Dendritic cell treated with granulocyte-macrophage colony-stimulating factor and Interleukin-4, amounts not matched to agents 40 ng/mL and 50 ng/mL, for 4 days (primary cell): ENCODE measurements at regions of chr11 and their contacts with region 1.

Region 1: DNA sequence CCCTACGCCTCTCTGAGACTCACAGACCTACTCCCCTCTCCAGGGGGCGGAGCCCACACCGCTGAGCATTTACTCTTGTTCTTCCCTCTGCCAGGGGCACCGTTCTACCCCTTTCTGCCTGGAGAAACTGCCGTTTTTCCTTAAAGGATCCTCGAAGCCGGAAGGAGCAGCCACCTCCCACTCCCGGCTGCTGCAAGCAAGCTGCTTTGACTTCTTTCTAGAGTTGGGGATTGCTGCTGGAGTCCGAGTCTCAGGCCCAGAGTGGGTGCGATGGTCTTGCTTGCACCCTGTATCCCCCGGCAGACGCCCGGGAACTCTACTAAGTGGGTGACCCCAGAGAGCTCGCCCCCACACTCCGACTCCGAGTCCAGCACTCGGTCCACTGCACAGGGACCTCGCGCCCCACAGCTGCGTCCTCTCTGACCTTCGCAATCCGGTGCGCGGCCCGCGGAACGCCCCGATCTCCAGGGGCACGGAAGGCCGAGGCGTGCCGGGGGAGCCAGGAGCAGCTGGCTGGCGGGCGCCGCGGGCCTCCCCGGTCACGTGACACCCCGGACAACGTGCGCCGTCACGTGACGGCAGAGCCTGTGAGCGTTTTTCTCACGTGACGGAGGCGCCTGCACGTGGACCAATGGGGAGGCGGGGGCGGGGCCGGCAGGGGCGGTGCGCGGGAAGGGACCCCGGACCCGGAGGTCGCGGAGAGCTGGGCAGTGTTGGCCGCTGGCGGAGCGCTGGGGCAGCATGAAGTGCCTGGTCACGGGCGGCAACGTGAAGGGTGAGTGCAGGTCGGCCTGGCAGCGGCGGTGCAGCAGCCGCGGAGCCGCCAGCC is at the start of gene RAD9A:
- H3K4me3 Mint-ChIP-seq: peak within 1 kb of the TSS; percentile 93
- H3K27ac Mint-ChIP-seq: peak within 1 kb of the TSS; percentile 95
- H3K4me1 Mint-ChIP-seq: peaks cover 60% of the 10 kb centered on the region
- H3K27me3 Mint-ChIP-seq: no peaks in the 10 kb centered on the region

Region 2: GRCh38 chr11:67428052-67428914 is 36.8 kb after region 1 on chr11 and contains the start of gene RPS6KB2:
- intact Hi-C with region 1: loop called (anchors 5 kb)
- H3K4me3 Mint-ChIP-seq: peak within 1 kb of the TSS; percentile 97
- H3K27ac Mint-ChIP-seq: peak within 1 kb of the TSS; percentile 88
- H3K4me1 Mint-ChIP-seq: peaks cover 27% of the 10 kb centered on the region
- H3K27me3 Mint-ChIP-seq: no peaks in the 10 kb centered on the region

Region 3: DNA sequence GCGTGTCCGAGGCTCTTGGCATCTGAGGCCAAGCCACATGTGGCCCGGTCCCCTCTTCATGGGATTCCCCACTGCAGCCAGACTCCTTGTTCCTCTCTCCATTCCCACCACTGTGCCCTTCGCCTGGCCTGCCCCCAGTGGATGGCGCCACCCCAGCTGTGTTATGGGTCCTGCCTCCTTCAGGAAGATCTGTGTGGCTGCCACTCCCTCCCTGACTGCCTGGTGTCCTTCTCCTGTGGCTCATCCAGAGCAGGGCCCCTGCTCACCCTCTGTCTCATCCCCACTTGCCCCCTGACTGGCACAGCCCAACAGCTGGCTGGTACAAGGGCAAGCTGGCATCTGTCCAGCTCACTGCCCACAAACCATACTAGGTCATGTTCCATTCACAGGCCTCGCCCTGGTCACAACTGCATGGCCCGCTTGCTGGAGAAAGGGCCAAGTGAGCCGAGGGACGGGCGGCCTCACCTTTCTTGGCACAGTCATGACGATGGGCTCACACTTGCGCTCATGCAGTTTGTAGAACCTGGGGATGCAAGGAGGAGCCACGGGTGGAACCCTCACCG is 47.9 kb after region 1 on chr11:
- intact Hi-C with region 1: no loop called
- H3K4me3 Mint-ChIP-seq: no peak overlapping the region
- H3K27ac Mint-ChIP-seq: peak overlapping the region; percentile 60
- H3K4me1 Mint-ChIP-seq: peaks cover 72% of the 10 kb centered on the region
- H3K27me3 Mint-ChIP-seq: no peaks in the 10 kb centered on the region